Activated CD4-positive, alpha-beta T cell treated with anti-CD3 and anti-CD28 coated beads, Interleukin-2, amount 10 ng/mL, durations not matched to agents 24 days and 14 days (primary cell): ENCODE measurements at regions of chr6 and their contacts with region 1.

Region 1: GRCh38 chr6:49606696-49607390 is 29.8 kb downstream of the RHAG start:
- DNase-seq: peak; percentile 73
- H3K4me3 Mint-ChIP-seq: no peak overlapping the region
- H3K27ac Mint-ChIP-seq: no peak overlapping the region
- H3K4me1 Mint-ChIP-seq: no peaks in the 10 kb centered on the region
- H3K27me3 Mint-ChIP-seq: peaks cover 3% of the 10 kb centered on the region

Region 2: DNA sequence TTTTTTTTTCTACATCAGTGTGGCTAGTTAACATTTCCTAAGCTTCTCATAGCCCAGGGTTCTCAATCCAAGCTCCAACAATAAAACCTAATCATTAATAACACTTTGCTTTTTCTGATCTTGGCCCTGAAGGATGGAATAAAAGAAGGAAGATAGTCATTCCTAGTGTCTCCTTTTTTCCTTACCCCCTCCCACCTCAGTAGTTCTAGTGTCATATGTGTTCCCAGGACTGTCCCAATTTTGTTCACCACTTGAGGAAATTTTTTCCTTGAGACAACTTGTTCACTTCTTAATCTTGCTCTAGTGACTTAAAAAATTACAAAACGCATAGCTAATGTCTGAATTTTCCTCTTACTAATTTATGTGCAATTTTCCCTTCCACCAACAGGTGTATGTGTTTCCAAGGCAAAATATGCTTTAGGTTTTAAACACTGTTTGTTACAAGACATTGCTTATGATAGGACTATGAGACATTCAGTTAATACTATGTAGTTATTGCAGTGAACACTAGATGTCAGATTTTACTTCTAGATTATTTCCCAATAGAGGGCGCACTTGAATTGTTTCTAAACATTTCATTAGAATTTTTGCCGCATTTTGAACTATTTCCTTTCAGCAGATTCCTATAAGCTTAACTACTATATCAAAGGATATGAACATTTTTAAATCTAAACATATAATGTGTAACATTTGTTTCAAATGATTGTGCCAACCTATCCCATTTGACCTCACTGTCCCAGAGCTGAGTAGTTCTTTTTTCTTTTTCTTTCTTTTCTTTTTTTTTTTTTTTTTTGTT is 74.9 kb before region 1 on chr6:
- intact Hi-C with region 1: loop called (anchors 1 kb)
- DNase-seq: no peak
- H3K4me3 Mint-ChIP-seq: no peak overlapping the region
- H3K27ac Mint-ChIP-seq: no peak overlapping the region
- H3K4me1 Mint-ChIP-seq: peaks cover 2% of the 10 kb centered on the region
- H3K27me3 Mint-ChIP-seq: peaks cover 24% of the 10 kb centered on the region